ENCODE measurements at regions of chr19 and their contacts with region 1.

Region 1: DNA sequence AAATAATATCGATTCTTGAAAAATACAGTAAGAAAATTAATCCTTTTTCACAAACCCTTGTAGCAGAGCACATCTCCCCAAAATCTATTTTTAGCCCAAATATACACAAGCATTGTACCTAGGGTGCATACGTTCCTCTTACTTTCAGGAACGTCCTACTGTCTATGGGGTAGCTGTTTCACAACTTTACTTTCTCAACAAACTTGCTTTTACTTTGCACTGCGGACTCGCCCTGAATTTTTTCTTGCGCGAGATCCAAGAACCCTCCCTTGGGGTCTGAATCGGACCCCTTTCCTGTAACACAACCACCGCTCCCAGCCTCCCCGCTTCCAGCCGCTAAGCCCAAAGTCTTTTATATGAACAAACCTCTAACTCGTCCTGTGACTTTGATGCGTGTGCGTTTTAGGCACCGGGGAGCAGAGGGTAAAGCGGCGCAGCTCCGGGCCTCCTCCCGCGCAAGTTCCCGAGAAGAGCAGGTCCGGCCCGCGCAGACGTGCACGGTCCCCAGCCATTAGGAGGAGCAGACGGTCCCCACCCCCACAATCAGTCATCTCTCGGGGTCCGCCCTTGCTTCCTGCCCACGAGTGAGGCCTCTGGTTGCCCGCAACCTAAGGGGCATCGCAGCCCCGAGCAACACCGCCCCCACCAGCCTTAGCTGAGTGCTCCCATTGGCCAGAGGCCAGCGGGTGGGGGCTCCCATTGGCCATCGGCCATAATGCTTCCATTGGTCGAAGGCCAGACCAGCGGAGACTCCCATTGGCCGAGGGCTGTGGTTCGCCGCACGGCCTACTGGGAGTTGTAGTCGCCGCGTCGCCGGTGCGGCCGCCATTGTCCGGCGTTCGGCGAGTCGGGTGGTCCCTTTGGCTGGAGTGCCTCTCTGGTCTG is at the start of gene ZNF8:
- DNase-seq: peak; percentile 88
- ATAC-seq: peak; percentile 98
- H3K4me3 Mint-ChIP-seq: peak within 1 kb of the TSS; percentile 91
- H3K27ac Mint-ChIP-seq: peak within 1 kb of the TSS; percentile 95
- H3K4me1 Mint-ChIP-seq: peaks cover 44% of the 10 kb centered on the region
- H3K27me3 Mint-ChIP-seq: no peaks in the 10 kb centered on the region
- CTCF ChIP-seq: no peak
- total RNA-seq, gene ZNF8: 4.7 and 5.3 TPM in 2 replicates

Region 2: DNA sequence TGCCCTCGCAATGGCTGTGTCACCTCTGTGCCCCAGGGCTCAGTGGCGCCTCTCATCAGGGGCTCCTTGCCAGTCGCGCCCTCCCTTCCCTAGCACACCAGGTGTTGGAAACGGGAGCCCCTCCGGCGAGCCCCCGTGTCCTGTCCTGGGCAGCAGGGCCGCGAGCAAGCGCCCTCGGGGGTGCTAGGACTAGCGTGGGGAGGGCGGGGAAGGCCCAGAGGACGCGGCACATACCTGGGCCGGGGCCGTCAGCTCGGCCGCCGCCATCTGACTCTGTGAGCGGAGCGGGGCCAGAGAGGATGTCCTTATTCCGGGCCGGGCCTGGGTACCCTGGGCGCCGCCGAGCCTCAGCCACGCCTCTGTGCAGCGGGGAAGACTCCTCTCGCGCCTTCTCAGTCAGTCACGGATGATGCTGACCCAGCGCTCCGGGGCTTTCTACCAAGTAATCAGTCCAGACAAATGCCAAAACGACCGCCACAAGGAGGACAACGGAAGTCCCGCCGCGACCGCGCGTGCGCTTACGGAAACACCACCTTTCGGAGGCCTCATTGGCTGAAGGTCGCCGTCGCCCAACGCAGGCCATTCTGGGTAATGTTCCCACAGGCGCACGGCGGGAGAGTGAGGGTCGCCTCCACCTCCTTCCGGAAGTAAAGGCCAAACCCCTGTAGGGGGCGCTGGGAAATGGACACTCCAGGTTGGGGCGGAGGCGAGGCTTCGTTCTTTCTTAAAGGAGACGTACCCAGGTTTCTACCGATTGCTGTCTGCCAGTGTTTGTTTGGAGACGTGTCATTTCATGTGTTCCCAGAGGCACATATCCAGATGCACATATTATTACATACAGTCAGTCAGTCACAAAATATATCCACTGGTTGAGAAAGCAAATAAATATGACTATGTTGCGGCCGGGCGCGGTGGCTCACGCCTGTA is 330.9 kb before region 1 on chr19 and contains the start of gene ZNF256:
- CTCF ChIA-PET with region 1: no interaction called
- POLR2A ChIA-PET with region 1: no interaction called
- intact Hi-C with region 1: loop called (anchors 1 kb)
- DNase-seq: peak; percentile 83
- ATAC-seq: peak; percentile 99
- H3K4me3 Mint-ChIP-seq: peak within 1 kb of the TSS; percentile 96
- H3K27ac Mint-ChIP-seq: peak within 1 kb of the TSS; percentile 89
- H3K4me1 Mint-ChIP-seq: peaks cover 30% of the 10 kb centered on the region
- H3K27me3 Mint-ChIP-seq: no peaks in the 10 kb centered on the region
- CTCF ChIP-seq: no peak
- total RNA-seq, gene ZNF256: 16.6 and 20.2 TPM in 2 replicates

Region 3: DNA sequence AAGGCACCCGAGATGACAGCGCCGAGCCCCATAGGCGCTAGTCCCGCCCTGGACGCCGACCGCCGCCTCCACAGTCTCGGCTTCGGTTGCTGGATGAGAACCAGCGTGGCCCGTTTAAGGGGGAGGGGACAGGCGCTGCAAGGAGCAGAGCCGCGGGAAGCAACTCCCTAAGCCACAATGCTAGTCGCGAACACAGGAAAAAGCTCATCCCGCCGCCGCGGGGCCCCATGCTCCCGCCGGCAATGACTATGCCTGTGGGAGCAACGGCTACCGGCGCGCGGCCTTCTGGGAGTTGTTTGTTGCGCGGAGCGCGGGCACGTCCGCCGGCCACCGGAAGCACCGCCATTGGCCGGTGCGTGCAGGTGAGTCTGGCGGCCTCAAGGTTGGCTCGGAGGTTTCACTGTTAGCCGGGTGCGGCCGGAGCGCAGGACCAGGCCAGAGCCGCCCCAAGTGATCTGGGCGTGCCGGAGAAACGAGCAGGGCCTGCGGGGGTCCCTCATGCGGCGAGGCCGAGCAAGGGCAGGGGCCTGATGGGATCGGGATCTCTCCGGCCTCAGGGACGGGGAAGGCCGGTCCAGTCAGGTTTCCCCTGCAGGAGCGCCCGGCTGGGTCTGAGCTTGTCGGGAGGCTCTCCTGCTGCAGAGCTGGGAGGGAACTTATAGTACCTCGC is 49.7 kb before region 1 on chr19 and contains the start of gene ZNF544:
- CTCF ChIA-PET with region 1: no interaction called
- POLR2A ChIA-PET with region 1: no interaction called
- intact Hi-C with region 1: loop called (anchors 5 kb)
- DNase-seq: peak; percentile 66
- ATAC-seq: peak; percentile 83
- H3K4me3 Mint-ChIP-seq: peak within 1 kb of the TSS; percentile 97
- H3K27ac Mint-ChIP-seq: peak within 1 kb of the TSS; percentile 85
- H3K4me1 Mint-ChIP-seq: peaks cover 23% of the 10 kb centered on the region
- H3K27me3 Mint-ChIP-seq: no peaks in the 10 kb centered on the region
- CTCF ChIP-seq: no peak
- total RNA-seq, gene ZNF544: 45.2 and 61.7 TPM in 2 replicates

Region 4: GRCh38 chr19:58326914-58327726 is 48.7 kb after region 1 on chr19 and contains the start of gene ZSCAN22:
- CTCF ChIA-PET with region 1: no interaction called
- POLR2A ChIA-PET with region 1: interaction called, 6 read pairs
- intact Hi-C with region 1: loop called (anchors 1 kb)
- DNase-seq: peak; percentile 82
- ATAC-seq: peak; percentile 88
- H3K4me3 Mint-ChIP-seq: no peak within 1 kb of the TSS
- H3K27ac Mint-ChIP-seq: no peak within 1 kb of the TSS
- H3K4me1 Mint-ChIP-seq: peaks cover 2% of the 10 kb centered on the region
- H3K27me3 Mint-ChIP-seq: no peaks in the 10 kb centered on the region
- CTCF ChIP-seq: no peak
- total RNA-seq, gene ZSCAN22: 4.7 and 4.8 TPM in 2 replicates

Region 5: DNA sequence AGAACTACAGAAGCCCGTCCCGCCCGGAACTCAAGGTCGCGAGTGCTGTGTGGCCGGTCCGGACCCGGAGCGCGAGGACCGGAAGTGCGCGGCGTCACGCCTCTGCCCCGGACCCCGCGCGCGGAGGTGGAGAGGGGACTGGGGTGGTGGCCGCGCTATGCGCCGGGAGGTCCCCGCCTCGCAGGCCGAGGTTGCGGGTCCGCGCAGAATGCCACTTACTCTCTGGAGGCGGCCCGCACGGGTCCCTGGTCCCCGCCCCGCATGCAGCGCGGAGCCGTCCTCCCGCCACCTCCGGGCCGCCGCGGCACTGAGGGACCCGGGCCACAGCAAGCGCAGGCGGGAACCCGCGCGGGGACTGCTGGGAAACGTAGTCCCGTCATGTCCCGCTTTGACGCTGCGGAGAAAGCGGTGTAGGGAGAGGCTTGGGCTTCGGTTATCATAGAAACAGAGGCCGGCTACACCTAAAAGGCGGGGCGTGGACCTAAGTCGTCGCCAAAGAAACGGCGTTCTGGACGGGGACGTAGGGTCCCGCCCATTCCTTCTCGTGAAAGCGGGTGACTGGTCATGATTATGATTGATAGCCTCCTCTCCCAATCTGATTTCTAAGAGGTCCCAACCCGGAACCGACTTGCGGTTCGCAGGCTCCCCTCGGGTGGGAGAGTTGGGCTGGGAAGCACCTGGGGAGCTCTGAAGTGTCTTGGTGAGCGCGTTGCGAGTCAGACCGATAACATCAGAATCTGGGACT is 102.5 kb after region 1 on chr19 and contains the start of gene ZNF837:
- CTCF ChIA-PET with region 1: no interaction called
- POLR2A ChIA-PET with region 1: no interaction called
- intact Hi-C with region 1: loop called (anchors 2 kb)
- DNase-seq: peak; percentile 96
- ATAC-seq: peak; percentile 86
- H3K4me3 Mint-ChIP-seq: peak within 1 kb of the TSS; percentile 83
- H3K27ac Mint-ChIP-seq: peak within 1 kb of the TSS; percentile 87
- H3K4me1 Mint-ChIP-seq: peaks cover 37% of the 10 kb centered on the region
- H3K27me3 Mint-ChIP-seq: no peaks in the 10 kb centered on the region
- CTCF ChIP-seq: no peak
- total RNA-seq, gene ZNF837: 3.1 and 3.5 TPM in 2 replicates

Region 6: DNA sequence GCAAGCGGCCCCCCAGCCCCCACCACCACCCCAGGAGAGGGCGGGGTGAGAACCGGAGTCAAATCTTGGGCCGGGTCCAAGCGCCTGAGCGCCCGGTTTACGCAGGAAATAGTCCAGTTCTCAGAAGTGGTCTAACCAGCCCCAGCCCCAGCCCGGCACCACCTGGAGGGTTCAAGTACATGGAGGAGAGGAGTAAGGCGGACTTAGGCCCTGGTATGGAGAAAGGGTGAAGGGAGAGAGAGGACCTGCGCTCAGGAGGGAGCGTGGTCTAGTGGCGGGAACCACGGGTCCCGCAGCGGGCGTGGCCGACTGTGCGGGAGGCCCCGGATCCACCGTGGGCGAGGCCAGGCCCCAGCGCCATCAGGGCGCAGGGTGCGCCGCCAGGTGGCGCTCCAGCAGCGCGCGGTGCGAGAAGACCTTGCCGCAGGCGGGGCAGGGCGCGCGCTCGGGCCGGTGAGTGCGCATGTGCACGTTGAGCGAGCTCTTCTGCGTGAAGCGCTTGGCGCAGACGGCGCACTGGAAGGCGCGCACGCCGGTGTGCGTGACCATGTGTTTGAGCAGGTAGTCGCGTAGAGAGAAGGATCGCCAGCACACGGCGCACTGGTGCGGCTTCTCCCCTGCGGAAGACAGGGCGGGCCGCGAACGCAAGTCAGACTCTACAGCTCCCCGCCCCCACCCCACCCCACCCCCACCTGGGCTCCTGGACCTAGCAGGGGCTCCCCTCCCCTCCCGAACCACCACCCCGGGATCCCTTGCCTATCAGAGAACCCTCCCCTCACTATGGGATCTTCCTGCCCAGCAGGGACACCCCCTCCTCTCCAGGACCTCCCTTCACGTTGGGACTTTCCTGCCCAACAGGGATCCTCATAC is 235.5 kb after region 1 on chr19:
- CTCF ChIA-PET with region 1: no interaction called
- POLR2A ChIA-PET with region 1: no interaction called
- intact Hi-C with region 1: no loop called
- DNase-seq: peak; percentile 83
- ATAC-seq: peak; percentile 89
- H3K4me3 Mint-ChIP-seq: peak overlapping the region; percentile 73
- H3K27ac Mint-ChIP-seq: peak overlapping the region; percentile 24
- H3K4me1 Mint-ChIP-seq: peaks cover 32% of the 10 kb centered on the region
- H3K27me3 Mint-ChIP-seq: no peaks in the 10 kb centered on the region
- CTCF ChIP-seq: peak; percentile 24

Measured in activated B cell treated with CpG ODN at 0.5 μM for 24 hours (primary cell).